ENCODE measurements at regions of chr7 and their contacts with region 1.

Region 1: GRCh38 chr7:107865956-107866775 is 24.8 kb upstream of the DLD start:
- DNase-seq: no peak
- H3K4me3 ChIP-seq: no peak overlapping the region
- H3K27ac ChIP-seq: no peak overlapping the region
- H3K4me1 ChIP-seq: no peaks in the 10 kb centered on the region
- H3K27me3 ChIP-seq: no peaks in the 10 kb centered on the region
- CTCF ChIP-seq: no peak
- EP300 ChIP-seq: no peak
- POLR2A ChIP-seq: no peak

Region 2: DNA sequence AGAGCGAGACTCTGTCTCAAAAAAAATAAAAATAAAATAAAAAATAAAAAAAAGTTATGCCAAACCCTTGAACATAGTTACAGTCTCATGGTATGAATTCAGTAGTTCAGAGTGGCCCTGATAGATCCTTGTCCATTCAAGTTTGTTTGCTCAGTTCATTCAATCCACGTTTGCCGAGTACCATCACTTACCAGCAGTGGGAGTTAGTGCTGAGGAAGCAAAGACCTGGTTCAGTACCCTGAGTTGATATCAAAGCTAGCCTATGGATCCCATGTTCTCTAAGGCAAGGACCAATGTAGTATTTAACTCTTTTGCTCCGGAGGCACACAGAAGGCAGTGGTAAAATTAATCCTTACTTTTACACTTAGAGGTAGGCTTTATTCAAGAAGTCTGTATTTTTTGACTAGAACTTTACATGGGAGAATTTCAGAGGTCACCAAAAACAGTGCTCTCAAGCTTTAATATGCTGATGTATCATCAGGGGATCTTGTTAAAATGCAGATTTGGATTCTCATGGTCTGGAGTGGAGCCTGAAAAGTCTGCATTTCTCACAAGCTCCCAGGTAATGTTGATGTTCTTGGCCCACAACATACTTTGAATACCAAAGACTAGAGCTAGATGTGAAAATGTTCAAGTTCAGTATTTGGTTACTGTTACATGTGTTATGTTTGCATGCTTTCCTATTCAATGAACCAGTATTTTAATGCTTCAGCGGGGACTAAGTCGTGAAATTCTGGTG is 735.5 kb before region 1 on chr7:
- intact Hi-C with region 1: no loop called
- DNase-seq: no peak
- H3K4me3 ChIP-seq: no peak overlapping the region
- H3K27ac ChIP-seq: no peak overlapping the region
- H3K4me1 ChIP-seq: no peaks in the 10 kb centered on the region
- H3K27me3 ChIP-seq: no peaks in the 10 kb centered on the region
- CTCF ChIP-seq: no peak
- EP300 ChIP-seq: no peak
- POLR2A ChIP-seq: no peak

Region 3: DNA sequence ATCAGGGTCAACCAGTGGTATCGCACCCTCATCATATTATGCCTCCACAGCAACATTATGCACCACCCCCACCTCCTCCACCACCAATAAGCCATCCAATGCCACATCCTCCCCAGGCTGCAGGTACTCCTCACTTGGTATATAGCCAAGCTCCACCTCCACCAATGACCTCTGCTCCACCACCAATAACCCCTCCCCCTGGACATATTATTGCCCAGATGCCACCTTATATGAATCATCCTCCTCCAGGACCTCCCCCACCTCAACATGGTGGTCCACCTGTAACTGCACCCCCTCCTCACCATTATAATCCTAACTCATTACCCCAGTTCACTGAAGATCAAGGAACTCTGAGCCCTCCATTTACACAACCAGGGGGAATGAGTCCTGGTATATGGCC is 107.5 kb before region 1 on chr7:
- intact Hi-C with region 1: no loop called
- DNase-seq: no peak
- H3K4me3 ChIP-seq: no peak overlapping the region
- H3K27ac ChIP-seq: no peak overlapping the region
- H3K4me1 ChIP-seq: peaks cover 0 to 15% (median 3%) of the 10 kb centered on the region in 4 donors
- H3K27me3 ChIP-seq: no peaks in the 10 kb centered on the region
- CTCF ChIP-seq: no peak
- EP300 ChIP-seq: no peak
- POLR2A ChIP-seq: no peak

Region 4: DNA sequence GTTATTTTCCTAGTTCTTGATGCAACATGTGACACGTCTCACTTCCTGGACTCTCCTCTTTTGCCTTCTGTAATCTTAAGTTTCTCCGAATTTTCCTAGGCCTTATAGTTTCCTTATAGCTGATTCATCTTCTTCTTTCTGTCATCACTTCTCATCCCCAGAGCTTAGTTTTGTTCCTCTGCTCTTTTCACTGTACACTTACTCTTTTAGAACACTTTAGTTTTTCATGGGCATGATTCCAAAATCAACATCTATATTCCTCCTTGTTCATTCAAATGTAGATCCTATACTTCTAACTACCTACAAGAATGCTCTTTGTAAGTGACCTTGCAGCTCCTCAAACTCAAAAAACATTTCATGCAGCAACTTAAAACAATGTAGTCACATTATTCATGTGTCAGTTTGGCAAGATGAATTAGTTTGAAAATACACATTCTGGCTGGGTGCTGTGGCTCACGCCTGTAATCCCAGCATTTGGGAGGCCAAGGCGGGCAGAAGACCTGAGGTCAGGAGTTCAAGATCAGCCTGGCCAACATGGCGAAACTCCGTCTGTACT is 50.1 kb before region 1 on chr7:
- intact Hi-C with region 1: loop called (anchors 5 kb)
- DNase-seq: no peak
- H3K4me3 ChIP-seq: no peak overlapping the region
- H3K27ac ChIP-seq: peak overlapping the region; percentile 76 to 86 (median 82)
- H3K4me1 ChIP-seq: peaks cover 0 to 43% (median 29%) of the 10 kb centered on the region in 4 donors
- H3K27me3 ChIP-seq: no peaks in the 10 kb centered on the region
- CTCF ChIP-seq: no peak
- EP300 ChIP-seq: no peak
- POLR2A ChIP-seq: no peak

Region 5: DNA sequence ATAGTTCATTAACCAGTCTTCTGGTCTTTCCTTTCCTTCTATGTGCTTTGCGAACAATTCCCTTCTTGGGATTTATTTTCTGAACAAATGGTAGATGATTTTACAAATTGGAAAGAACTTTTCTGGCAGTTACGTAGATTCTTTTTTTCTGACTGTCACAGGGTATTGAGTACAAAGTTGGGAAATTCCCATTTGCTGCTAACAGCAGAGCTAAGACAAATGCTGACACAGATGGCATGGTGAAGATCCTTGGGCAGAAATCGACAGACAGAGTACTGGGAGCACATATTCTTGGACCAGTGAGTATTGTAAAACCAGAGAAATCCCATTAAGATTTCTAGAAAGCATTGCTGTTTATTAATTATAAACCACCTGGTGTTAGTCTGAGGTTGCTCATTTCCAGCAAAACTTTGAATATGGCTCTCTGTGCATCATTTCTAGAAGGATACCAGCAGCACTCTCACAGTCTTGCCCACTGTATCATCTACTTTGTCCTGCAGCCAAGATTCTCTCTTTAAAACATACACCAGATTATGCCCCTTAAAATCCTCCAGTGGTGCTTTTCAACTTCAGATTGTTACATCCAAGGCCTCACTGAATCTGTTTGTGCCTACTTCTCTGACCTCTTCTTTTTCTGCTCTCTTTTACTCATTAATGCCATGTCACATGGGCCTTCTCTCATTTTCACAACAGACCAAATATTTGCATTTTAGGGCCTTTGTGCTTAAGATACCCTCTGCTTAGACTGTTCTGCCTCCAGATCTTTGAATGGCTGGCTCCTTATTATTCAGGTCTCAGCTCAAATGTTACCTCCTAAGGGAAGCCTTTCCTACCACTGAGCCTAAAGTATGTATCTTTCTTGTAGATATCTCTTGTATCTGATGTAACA is 51.8 kb after region 1 on chr7:
- intact Hi-C with region 1: no loop called
- DNase-seq: no peak
- H3K4me3 ChIP-seq: no peak overlapping the region
- H3K27ac ChIP-seq: peak overlapping the region in 2 of 4 donors; percentile 37 to 41
- H3K4me1 ChIP-seq: peaks cover 0 to 40% (median 20%) of the 10 kb centered on the region in 4 donors
- H3K27me3 ChIP-seq: no peaks in the 10 kb centered on the region
- CTCF ChIP-seq: no peak
- EP300 ChIP-seq: no peak
- POLR2A ChIP-seq: no peak